ENCODE measurements at regions of chr5 and their contacts with region 1.

Region 1: GRCh38 chr5:72108202-72109061 is 1.2 kb downstream of the MAP1B start:
- DNase-seq: peak; percentile 64
- H3K4me3 Mint-ChIP-seq: peak overlapping the region; percentile 94
- H3K27ac Mint-ChIP-seq: peak overlapping the region; percentile 71
- H3K4me1 Mint-ChIP-seq: no peaks in the 10 kb centered on the region
- H3K27me3 Mint-ChIP-seq: peaks cover 31% of the 10 kb centered on the region
- CTCF ChIP-seq: no peak

Region 2: DNA sequence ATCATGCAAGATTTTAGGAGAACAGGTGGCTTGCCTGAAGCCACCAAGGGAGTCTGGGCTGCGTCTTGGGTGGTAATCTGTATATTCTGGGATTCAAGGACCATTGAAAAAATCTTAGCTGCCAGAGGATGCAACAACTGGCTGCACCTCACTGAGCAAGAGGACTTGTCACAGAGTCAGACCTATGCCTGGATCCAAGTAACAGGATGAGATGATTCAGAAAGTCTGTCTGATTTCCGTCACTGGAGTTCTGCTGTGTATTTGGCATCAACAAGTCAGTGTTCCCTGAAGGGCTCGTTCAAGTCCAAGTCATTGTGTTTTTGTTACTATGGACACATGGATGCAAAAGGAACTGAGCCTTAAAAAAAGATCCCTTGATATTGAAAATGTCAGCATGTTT is 427.1 kb before region 1 on chr5:
- CTCF ChIA-PET with region 1: no interaction called
- intact Hi-C with region 1: no loop called
- DNase-seq: no peak
- H3K4me3 Mint-ChIP-seq: no peak overlapping the region
- H3K27ac Mint-ChIP-seq: no peak overlapping the region
- H3K4me1 Mint-ChIP-seq: peaks cover 9% of the 10 kb centered on the region
- H3K27me3 Mint-ChIP-seq: no peaks in the 10 kb centered on the region
- CTCF ChIP-seq: no peak

Region 3: GRCh38 chr5:71932655-71933338 is 175.6 kb before region 1 on chr5:
- CTCF ChIA-PET with region 1: no interaction called
- intact Hi-C with region 1: loop called (anchors 10 kb)
- DNase-seq: peak; percentile 83
- H3K4me3 Mint-ChIP-seq: peak overlapping the region; percentile 28
- H3K27ac Mint-ChIP-seq: peak overlapping the region; percentile 93
- H3K4me1 Mint-ChIP-seq: peaks cover 23% of the 10 kb centered on the region
- H3K27me3 Mint-ChIP-seq: no peaks in the 10 kb centered on the region
- CTCF ChIP-seq: no peak

Region 4: GRCh38 chr5:72036951-72037350 is 71.5 kb before region 1 on chr5:
- CTCF ChIA-PET with region 1: no interaction called
- intact Hi-C with region 1: loop called (anchors 10 kb)
- DNase-seq: peak; percentile 2
- H3K4me3 Mint-ChIP-seq: no peak overlapping the region
- H3K27ac Mint-ChIP-seq: no peak overlapping the region
- H3K4me1 Mint-ChIP-seq: peaks cover 12% of the 10 kb centered on the region
- H3K27me3 Mint-ChIP-seq: no peaks in the 10 kb centered on the region
- CTCF ChIP-seq: no peak

Region 5: GRCh38 chr5:72203251-72203845 is 94.9 kb after region 1 on chr5:
- CTCF ChIA-PET with region 1: no interaction called
- intact Hi-C with region 1: no loop called
- DNase-seq: no peak
- H3K4me3 Mint-ChIP-seq: no peak overlapping the region
- H3K27ac Mint-ChIP-seq: no peak overlapping the region
- H3K4me1 Mint-ChIP-seq: no peaks in the 10 kb centered on the region
- H3K27me3 Mint-ChIP-seq: no peaks in the 10 kb centered on the region
- CTCF ChIP-seq: no peak